H1 (cell line): ENCODE measurements at regions of chr1 and their contacts with region 1.

Region 1: GRCh38 chr1:27525296-27526272 is 35.6 kb upstream of the WASF2 start:
- DNase-seq: peak in 1 of 2 experiments; percentile 81
- H3K4me3 ChIP-seq: peak overlapping the region in 3 of 4 experiments; percentile 15 to 42 (median 34); a peak in 4 of 8 replicates
- H3K27ac ChIP-seq: 0 out of 2 replicates have a peak overlapping the region, but pooled peaks have one; percentile 43
- H3K4me1 ChIP-seq: peaks cover 12 to 56% (median 42%) of the 10 kb centered on the region in 4 experiments
- H3K27me3 ChIP-seq: no peaks in the 10 kb centered on the region
- CTCF ChIP-seq: no peak
- EP300 ChIP-seq: no peak
- POLR2A ChIP-seq: no peak
- RAD21 ChIP-seq: no peak; a peak in 1 of 4 replicates

Region 2: DNA sequence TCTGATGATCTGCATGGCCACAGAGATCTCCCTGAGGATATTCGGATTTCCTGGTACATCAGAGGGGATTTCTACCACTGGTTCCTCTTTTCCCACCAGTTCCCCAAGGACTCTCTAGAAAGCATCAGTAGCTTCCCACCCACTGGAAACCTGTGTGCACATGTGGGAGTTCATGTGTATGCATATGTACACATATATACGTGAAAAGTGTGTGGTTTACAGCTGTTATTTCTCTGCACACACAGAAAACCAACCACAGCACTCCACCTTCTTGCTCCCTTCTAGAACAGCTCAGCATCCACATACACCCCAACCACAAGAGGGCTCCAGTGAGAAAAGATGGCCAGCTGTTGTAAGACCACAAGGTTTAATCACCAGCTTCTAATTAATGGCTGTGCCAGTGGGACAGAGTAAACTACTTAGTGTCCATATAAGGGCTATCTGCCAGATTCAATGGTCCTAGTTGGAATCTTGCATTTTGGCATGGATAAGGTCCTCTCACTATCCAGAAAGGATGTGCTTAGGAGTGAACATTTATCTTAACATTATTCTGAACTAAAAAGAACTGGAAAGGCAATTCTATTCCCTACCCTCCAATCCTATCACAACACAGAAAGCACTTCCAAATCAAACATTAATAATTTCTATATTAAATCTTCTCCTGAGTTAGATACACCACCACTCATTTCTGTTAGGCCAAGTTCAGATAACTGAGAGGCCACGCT is 109.0 kb before region 1 on chr1:
- CTCF ChIA-PET with region 1: interaction called, 30 read pairs
- POLR2A ChIA-PET with region 1: no interaction called
- DNase-seq: no peak
- H3K4me3 ChIP-seq: no peak overlapping the region
- H3K27ac ChIP-seq: no peak overlapping the region
- H3K4me1 ChIP-seq: peaks cover 5 to 12% (median 9%) of the 10 kb centered on the region in 4 experiments; a peak in 6 of 7 replicates
- H3K27me3 ChIP-seq: no peaks in the 10 kb centered on the region
- CTCF ChIP-seq: peak; percentile 46 to 90 (median 79)
- EP300 ChIP-seq: no peak
- POLR2A ChIP-seq: no peak
- RAD21 ChIP-seq: peak; percentile 70 to 80

Region 3: DNA sequence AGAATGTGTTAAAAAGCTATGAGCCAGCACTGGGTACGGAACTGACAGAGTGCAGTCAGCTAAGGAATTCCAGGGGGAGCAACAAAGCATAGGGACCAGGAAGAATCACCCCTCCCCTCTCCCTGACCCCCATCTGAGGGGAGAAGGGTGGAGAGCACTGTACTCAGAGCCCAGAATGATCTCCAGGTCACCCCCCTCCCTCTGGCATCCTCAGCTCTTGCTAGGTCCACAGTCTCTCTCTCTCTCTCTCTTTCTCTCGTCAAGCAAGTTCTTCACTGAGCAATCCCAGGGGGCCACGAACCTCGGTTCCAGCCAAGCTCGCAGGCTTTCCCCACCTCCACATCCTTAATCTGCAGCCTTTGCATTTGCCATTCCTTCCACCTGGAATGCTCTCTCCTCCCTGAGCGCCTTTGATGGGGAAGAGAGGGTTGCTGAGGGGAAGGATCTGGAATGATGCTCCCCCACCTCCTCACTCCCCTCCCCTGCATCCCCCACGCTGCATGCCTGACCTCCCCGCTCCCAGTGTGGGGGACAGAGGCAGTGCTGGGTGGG is 28.9 kb before region 1 on chr1:
- CTCF ChIA-PET with region 1: interaction called, 15 read pairs
- POLR2A ChIA-PET with region 1: interaction called, 7 read pairs
- DNase-seq: peak in 1 of 2 experiments; percentile 76
- H3K4me3 ChIP-seq: peak overlapping the region in 2 of 4 experiments; percentile 7 to 36; a peak in 3 of 8 replicates
- H3K27ac ChIP-seq: peak overlapping the region; percentile 59; the same call in 1 of the 2 replicates
- H3K4me1 ChIP-seq: peaks cover 3 to 11% (median 6%) of the 10 kb centered on the region in 4 experiments; a peak in 6 of 7 replicates
- H3K27me3 ChIP-seq: no peaks in the 10 kb centered on the region
- CTCF ChIP-seq: peak; percentile 51 to 83 (median 69)
- EP300 ChIP-seq: peak in 1 of 2 experiments; percentile 69; a peak in 1 of 3 replicates
- POLR2A ChIP-seq: no peak
- RAD21 ChIP-seq: peak; percentile 61 to 62

Region 4: DNA sequence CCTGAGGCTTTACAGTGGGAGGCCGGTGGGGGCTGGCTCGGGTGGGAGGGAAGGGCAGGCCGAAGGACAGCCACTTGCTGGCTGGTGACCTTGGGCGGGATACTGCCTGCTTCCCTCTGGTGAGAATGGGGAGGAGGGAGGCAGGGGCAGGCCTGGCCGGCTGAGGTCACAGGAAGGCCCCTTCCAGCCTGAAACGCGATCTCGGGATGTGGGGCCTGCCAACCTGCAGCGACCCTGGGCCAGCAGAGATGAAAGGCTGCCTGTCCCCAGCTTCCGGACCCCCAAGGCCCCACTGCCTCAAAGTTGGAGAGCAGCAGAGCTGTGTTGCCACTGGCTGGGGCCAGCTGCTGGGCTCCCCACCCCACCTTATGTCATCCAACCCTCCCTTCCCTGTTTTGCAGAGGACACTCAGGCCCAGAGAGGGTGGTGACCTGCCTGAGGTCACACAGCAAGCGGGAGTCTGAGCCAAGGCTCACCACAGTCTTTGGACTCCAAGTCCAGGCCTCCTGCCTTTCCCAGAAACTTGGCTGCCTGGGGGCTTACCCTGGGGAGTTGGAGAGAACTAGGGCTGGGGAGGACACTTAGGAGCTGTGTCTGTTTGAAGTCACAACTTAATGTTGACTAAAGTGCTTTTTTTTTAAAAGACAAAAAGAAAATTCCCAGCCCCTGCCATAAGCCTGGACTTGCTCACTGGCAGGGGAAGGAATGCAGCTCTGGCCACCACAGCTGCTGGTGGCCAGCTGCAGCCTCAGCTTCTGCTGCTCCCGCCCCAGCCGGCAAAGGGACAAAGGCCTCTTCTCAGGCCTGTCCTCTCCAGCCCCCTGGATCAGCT is 20.8 kb before region 1 on chr1:
- CTCF ChIA-PET with region 1: interaction called, 15 read pairs
- POLR2A ChIA-PET with region 1: interaction called, 10 read pairs
- DNase-seq: peak in 1 of 2 experiments; percentile 67
- H3K4me3 ChIP-seq: no peak overlapping the region
- H3K27ac ChIP-seq: no peak overlapping the region
- H3K4me1 ChIP-seq: peaks cover 0 to 14% (median 6%) of the 10 kb centered on the region in 4 experiments; a peak in 5 of 7 replicates
- H3K27me3 ChIP-seq: no peaks in the 10 kb centered on the region
- CTCF ChIP-seq: no peak
- EP300 ChIP-seq: no peak
- POLR2A ChIP-seq: no peak
- RAD21 ChIP-seq: no peak

Region 5: DNA sequence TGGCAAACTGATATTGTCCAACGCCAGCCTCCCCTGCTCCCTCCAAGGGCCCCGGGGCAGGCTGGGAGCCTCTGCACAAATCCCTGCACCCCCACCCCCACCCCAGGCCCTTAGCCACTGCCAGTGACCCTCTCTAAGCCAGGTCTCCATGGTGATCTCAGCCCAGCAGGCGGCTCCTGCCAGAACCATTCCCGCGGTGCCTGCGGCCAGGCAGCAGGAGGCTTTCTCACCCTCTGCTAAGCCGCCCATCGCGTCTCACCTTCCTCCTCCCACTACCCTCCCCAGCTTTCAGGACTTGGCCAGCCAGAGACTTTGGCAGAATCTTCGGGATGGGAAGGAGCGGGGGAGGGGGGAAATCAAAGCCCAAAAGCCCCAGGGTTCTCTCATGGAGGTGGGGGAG is 11.2 kb after region 1 on chr1:
- CTCF ChIA-PET with region 1: interaction called, 7 read pairs
- POLR2A ChIA-PET with region 1: interaction called, 10 read pairs
- DNase-seq: peak in 1 of 2 experiments; percentile 66
- H3K4me3 ChIP-seq: no peak overlapping the region
- H3K27ac ChIP-seq: peak overlapping the region; percentile 11; the same call in 1 of the 2 replicates
- H3K4me1 ChIP-seq: peaks cover 12 to 33% (median 23%) of the 10 kb centered on the region in 4 experiments
- H3K27me3 ChIP-seq: no peaks in the 10 kb centered on the region
- CTCF ChIP-seq: no peak
- EP300 ChIP-seq: no peak
- POLR2A ChIP-seq: no peak
- RAD21 ChIP-seq: peak in 1 of 2 experiments; percentile 15; a peak in 1 of 4 replicates

Region 6: DNA sequence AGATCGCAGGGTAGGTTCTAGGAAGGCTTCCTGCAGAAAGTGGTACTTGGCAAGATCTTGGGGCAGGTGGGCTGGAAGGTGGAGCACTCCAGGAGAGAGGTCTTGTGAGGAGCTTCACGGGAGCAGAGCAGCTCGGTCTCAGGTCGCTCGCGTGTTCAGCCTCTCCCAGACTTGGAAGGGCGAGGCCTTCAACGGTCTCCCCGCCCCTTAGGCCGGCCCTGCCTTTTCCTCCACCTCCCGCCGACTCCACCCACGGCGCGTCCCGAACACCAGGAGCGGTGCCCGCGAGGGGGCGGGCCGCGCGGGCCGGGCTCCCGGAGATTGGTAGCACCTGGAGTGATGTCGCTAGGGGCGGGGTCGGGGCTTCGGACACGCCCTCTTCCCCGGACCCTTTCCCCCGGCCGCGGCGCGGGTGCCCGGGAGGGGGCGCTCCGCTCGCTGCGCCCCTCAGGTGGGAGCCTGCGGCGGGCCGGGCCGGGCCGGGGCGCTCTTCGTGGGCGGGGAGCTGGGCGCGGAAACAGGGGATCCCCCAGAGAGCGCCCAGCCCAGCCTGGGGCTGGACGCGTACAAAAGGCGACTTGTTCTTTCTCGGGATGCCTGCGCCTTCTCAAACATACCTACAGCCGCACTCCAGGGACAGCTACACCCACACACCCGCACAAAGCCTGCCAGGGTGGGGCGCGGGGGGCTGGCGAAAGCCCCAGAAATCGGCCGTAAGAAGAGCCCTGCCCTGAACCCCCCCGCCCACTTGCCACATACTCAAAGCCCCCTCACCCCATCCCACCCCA is 42.9 kb after region 1 on chr1:
- CTCF ChIA-PET with region 1: interaction called, 38 read pairs
- POLR2A ChIA-PET with region 1: interaction called, 26 read pairs
- DNase-seq: peak; percentile 80 to 97
- H3K4me3 ChIP-seq: peak overlapping the region in 3 of 4 experiments; percentile 1 to 43 (median 29); a peak in 6 of 8 replicates
- H3K27ac ChIP-seq: peak overlapping the region; percentile 1; the same call in 1 of the 2 replicates
- H3K4me1 ChIP-seq: peaks cover 37 to 77% (median 67%) of the 10 kb centered on the region in 4 experiments
- H3K27me3 ChIP-seq: no peaks in the 10 kb centered on the region
- CTCF ChIP-seq: peak in 2 of 3 experiments; percentile 73 to 91; a peak in 3 of 4 replicates
- EP300 ChIP-seq: no peak
- POLR2A ChIP-seq: no peak
- RAD21 ChIP-seq: peak; percentile 32 to 69

Region 7: GRCh38 chr1:27725374-27726173 is 200.0 kb after region 1 on chr1 and contains the start of gene FAM76A:
- CTCF ChIA-PET with region 1: no interaction called
- POLR2A ChIA-PET with region 1: no interaction called
- DNase-seq: peak; percentile 98 to 99
- H3K4me3 ChIP-seq: peak within 1 kb of the TSS; percentile 77 to 89 (median 86)
- H3K27ac ChIP-seq: peak within 1 kb of the TSS; percentile 65
- H3K4me1 ChIP-seq: peaks cover 0 to 5% (median under 1%) of the 10 kb centered on the region in 4 experiments; a peak in 3 of 7 replicates
- H3K27me3 ChIP-seq: peaks cover 0 to 2% (median 0%) of the 10 kb centered on the region in 4 experiments; a peak in 1 of 7 replicates
- CTCF ChIP-seq: peak in 2 of 3 experiments; percentile 33 to 53; a peak in 3 of 4 replicates
- EP300 ChIP-seq: peak in 1 of 2 experiments; percentile 10; a peak in 1 of 3 replicates
- POLR2A ChIP-seq: peak in 1 of 2 experiments; percentile 45; a peak in 2 of 3 replicates
- RAD21 ChIP-seq: peak; percentile 11 to 17; a peak in 1 of 4 replicates
- total RNA-seq, gene FAM76A: 12.8 and 16.2 TPM in 2 replicates